Naive thymus-derived CD4-positive, alpha-beta T cell (primary cell): ENCODE measurements at regions of chr1 and their contacts with region 1.

Region 1: DNA sequence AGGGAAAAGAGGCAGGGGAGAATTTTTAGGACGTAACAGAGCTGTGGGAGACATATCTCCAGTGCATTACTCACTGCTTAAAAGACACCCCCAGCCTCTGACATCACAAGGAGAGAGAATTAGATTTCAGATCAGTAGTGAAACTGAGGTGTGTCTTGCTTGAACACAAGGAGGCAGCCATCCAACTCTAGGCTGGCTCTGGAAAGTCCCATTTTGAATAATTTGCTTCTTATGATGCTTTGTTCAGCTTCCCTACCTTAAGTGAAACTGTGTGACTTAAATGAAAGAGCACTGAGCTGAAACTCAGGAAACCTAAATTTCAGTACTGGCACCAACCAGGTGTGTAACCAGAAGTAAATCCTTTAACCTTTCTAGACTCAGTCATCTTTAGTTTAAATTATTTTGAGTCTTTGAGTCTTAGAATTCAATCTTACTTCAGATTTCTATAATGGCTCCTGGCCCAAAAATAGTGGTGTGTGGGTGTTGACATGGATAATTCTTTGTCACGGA is 251.6 kb upstream of the SGIP1 start:
- DNase-seq: peak in 8 of 9 donors; percentile 49 to 88 (median 68)
- ATAC-seq: peak; percentile 95
- H3K4me3 ChIP-seq: no peak overlapping the region
- H3K4me3 Mint-ChIP-seq: peak overlapping the region in 4 of 10 donors; percentile 12 to 57 (median 25)
- H3K27ac ChIP-seq: peak overlapping the region; percentile 64
- H3K27ac Mint-ChIP-seq: peak overlapping the region; percentile 70 to 93 (median 85)
- H3K4me1 ChIP-seq: peaks cover 49 to 59% of the 10 kb centered on the region in 2 donors
- H3K4me1 Mint-ChIP-seq: peaks cover 57 to 98% (median 89%) of the 10 kb centered on the region in 7 donors
- H3K27me3 ChIP-seq: no peaks in the 10 kb centered on the region
- H3K27me3 Mint-ChIP-seq: no peaks in the 10 kb centered on the region

Region 2: DNA sequence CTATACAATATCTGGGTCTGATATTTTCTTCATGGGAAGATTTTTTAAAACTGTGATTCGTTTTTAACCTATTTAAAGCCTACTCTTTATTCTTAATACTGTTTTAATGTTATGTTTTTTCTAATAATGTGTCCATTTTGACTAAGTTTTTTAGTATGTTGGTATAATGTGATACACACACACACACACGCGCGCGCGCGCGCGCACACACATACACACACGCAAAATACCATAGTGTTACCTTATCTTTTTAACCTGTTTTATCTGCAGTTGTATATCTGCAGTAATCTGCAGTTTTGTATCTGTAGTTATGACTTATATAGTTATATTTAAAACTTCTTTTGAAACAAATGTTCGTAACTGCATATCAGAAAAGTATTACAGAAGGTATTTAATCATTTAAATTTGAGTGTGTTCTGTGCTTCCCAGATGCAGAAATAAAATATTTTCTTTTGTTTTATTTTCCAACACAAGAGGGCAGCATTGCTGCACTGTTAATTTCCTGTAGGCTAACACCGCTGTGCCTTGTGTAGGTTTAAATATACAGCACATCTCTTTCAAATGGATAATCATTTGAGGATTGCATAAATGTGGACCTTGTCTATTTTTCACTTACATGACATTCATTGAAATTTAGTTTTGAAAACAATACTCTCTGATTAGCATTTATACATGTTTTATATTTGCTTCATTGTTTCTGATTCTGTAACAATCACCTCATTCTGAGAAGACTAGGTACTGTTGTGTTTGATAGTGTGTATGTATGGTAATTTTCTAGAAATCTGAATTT is 323.6 kb before region 1 on chr1:
- CTCF ChIA-PET with region 1: interaction called, 5 read pairs
- POLR2A ChIA-PET with region 1: no interaction called
- intact Hi-C with region 1: loop called in 1 of 2 experiments (anchors 1 kb)
- DNase-seq: peak in 7 of 9 donors; percentile 23 to 75 (median 64)
- ATAC-seq: peak; percentile 80
- H3K4me3 ChIP-seq: no peak overlapping the region
- H3K4me3 Mint-ChIP-seq: no peak overlapping the region
- H3K27ac ChIP-seq: no peak overlapping the region
- H3K27ac Mint-ChIP-seq: no peak overlapping the region
- H3K4me1 ChIP-seq: no peaks in the 10 kb centered on the region
- H3K4me1 Mint-ChIP-seq: peaks cover 0 to 12% (median 0%) of the 10 kb centered on the region in 7 donors
- H3K27me3 ChIP-seq: no peaks in the 10 kb centered on the region
- H3K27me3 Mint-ChIP-seq: peaks cover 0 to 7% (median 3%) of the 10 kb centered on the region in 5 donors

Region 3: DNA sequence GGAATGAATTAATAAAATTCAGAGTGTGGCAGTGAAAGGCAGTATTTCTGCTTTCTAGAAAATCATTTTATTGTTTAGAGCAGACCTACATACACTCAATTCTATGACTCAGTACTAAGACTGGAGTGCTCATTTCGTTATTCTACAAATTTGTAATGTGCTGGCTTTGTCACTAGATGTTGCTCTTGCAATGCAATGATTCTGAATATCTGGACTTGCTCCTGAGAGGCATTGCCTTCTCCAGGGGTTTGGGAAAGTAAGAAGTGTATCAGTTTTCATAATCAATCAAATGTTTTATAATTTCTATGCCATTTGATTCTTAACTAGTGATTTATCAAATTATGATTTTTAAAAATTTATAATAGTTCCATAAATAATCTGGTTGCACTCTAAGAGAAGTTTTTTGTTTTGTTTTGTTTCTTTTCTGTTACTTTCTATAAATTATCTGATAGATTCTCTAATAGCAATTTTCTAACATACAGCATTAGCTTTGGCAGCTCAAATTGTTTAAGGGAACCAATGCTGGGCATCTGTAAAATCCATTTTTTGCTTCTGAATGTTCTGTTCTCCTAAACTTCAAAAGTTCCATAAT is 29.0 kb before region 1 on chr1:
- CTCF ChIA-PET with region 1: interaction called, 5 read pairs
- POLR2A ChIA-PET with region 1: no interaction called
- intact Hi-C with region 1: loop called in 1 of 2 experiments (anchors 1 kb)
- DNase-seq: peak in 6 of 9 donors; percentile 29 to 58 (median 46)
- ATAC-seq: peak; percentile 83
- H3K4me3 ChIP-seq: no peak overlapping the region
- H3K4me3 Mint-ChIP-seq: no peak overlapping the region
- H3K27ac ChIP-seq: no peak overlapping the region
- H3K27ac Mint-ChIP-seq: peak overlapping the region in 2 of 9 donors; percentile 19 to 64
- H3K4me1 ChIP-seq: peaks cover 10 to 12% of the 10 kb centered on the region in 2 donors
- H3K4me1 Mint-ChIP-seq: peaks cover 6 to 57% (median 19%) of the 10 kb centered on the region in 7 donors
- H3K27me3 ChIP-seq: no peaks in the 10 kb centered on the region
- H3K27me3 Mint-ChIP-seq: no peaks in the 10 kb centered on the region

Region 4: DNA sequence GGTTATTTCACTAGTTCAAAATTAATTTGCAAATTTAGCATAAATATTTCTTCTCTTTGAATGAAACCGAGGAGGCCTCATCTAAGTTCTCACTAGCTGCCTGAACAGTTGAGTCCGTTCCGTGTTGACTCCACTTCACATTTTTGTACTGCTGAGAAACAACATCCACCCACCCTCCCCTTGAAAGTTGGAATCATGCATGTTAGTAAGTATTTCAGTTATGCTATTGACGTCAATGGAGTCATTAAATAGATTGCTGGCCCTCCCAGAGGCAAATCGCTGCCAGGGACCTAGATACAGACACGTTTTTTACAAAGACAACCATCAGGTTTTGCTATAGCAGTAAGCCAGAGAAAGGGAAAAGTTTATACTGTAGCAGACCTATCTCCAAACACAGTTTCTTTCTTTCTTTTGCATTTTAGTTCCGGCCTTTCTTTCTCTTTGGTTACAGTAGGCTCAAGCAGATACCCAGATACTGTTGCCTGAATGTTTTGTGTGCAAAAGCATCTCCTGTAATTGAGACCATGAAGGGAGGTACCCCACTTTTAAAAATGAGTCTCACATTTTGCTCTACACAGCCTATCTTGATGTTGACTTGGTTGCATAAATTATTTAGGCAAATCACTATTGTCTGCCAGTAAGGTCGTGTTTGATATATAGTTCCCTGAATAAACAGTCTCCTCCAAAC is 11.0 kb before region 1 on chr1:
- CTCF ChIA-PET with region 1: no interaction called
- POLR2A ChIA-PET with region 1: interaction called, 6 read pairs
- intact Hi-C with region 1: loop called (anchors 1 kb)
- DNase-seq: peak in 7 of 9 donors; percentile 43 to 72 (median 64)
- ATAC-seq: peak; percentile 64
- H3K4me3 ChIP-seq: no peak overlapping the region
- H3K4me3 Mint-ChIP-seq: peak overlapping the region in 9 of 10 donors; percentile 22 to 69 (median 33)
- H3K27ac ChIP-seq: peak overlapping the region; percentile 59
- H3K27ac Mint-ChIP-seq: peak overlapping the region; percentile 60 to 92 (median 87)
- H3K4me1 ChIP-seq: peaks cover 30 to 43% of the 10 kb centered on the region in 2 donors
- H3K4me1 Mint-ChIP-seq: peaks cover 36 to 69% (median 54%) of the 10 kb centered on the region in 7 donors
- H3K27me3 ChIP-seq: no peaks in the 10 kb centered on the region
- H3K27me3 Mint-ChIP-seq: no peaks in the 10 kb centered on the region

Region 5: DNA sequence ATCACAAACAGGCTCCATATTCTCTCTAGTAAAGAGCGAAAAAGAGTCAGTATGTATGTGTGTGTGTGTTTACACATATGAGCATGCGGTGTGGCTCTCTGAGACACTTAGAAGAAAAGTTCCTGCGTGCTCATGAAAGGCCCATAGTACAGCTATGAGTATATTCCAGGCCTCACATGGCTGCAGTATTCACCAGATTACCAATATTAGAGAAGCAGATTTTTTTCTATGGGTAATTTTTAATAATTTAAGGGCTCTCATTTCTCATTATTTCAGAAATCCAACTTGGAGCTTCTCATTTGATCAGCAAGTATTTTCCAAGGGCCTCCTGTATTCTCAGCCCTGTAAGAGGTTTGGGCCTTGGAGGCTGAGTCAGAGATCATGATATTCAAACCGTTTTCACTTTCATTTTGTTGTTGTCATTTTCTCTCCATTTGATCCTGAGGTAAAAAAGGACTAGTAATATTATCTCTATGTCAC is 18.6 kb after region 1 on chr1:
- CTCF ChIA-PET with region 1: interaction called, 6 read pairs
- POLR2A ChIA-PET with region 1: interaction called, 7 read pairs
- intact Hi-C with region 1: loop called (anchors 1 kb)
- DNase-seq: peak in 7 of 9 donors; percentile 32 to 62 (median 45)
- ATAC-seq: peak; percentile 80
- H3K4me3 ChIP-seq: peak overlapping the region; percentile 12
- H3K4me3 Mint-ChIP-seq: peak overlapping the region; percentile 68 to 92 (median 85)
- H3K27ac ChIP-seq: peak overlapping the region; percentile 5
- H3K27ac Mint-ChIP-seq: peak overlapping the region; percentile 82 to 98 (median 91)
- H3K4me1 ChIP-seq: peaks cover 24 to 29% of the 10 kb centered on the region in 2 donors
- H3K4me1 Mint-ChIP-seq: peaks cover 12 to 46% (median 30%) of the 10 kb centered on the region in 7 donors
- H3K27me3 ChIP-seq: no peaks in the 10 kb centered on the region
- H3K27me3 Mint-ChIP-seq: peaks cover 0 to 3% (median 0%) of the 10 kb centered on the region in 5 donors

Region 6: DNA sequence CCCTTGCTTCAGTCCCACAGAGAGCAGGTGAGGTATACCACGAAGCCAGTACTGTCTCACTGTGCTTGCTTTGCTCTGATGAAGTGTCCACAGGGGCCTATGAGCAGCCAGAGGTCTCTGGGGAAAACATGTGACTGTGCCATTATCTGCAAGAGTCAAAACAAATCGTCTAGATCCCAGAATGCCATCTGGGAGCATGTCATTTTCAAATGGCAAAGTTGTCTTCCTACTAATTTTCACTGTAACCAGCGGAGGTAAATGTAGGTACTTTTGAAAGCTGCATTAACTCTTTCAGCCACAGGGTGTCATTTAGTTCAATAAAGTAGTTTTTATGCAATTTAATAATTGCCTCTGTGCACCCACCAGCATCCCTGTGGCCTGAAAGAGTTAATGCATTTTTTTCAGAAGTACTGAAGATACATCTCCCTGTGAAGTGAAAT is 77.9 kb after region 1 on chr1:
- CTCF ChIA-PET with region 1: no interaction called
- POLR2A ChIA-PET with region 1: interaction called, 3 read pairs
- intact Hi-C with region 1: loop called in 1 of 2 experiments (anchors 1 kb)
- DNase-seq: no peak
- ATAC-seq: no peak
- H3K4me3 ChIP-seq: no peak overlapping the region
- H3K4me3 Mint-ChIP-seq: no peak overlapping the region
- H3K27ac ChIP-seq: no peak overlapping the region
- H3K27ac Mint-ChIP-seq: peak overlapping the region in 3 of 9 donors; percentile 45 to 72 (median 58)
- H3K4me1 ChIP-seq: peaks cover 40 to 51% of the 10 kb centered on the region in 2 donors
- H3K4me1 Mint-ChIP-seq: peaks cover 40 to 80% (median 65%) of the 10 kb centered on the region in 7 donors
- H3K27me3 ChIP-seq: no peaks in the 10 kb centered on the region
- H3K27me3 Mint-ChIP-seq: no peaks in the 10 kb centered on the region

Region 7: DNA sequence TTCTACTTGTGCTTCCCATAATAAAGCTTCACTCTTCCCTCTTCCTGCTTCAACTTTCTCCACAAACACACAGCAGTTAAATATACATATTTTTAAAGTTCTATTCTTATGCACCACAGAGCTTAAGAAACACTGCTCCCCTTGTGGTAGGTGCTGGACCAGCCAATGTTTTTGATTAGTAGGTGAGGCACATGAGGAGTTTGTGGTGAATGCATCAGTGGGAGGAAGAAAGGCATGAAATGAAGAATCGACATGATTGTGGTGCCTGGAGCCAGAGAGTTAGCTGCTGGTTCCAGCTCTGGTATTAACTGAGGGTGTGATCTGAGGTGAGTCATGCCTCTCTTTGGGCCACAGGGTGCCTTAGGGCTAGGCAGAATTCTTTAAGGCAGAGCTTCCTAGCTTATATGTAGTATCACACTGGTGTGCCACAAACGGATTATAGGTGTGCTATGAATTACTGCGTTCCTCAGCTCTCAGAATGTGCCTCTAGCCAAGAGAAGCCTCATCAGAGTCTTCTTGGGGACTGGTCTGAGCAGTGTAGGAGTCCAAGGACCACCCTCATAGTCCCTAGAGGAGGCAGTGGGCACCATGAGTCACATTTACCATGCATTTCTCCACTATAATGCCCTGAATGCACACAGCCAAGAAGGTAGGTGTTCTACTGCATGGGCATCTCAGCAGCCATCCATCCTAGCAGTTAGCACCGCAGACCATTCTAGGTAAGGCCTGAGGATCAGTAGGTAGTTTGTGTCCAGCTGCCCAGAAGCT is 154.2 kb after region 1 on chr1:
- CTCF ChIA-PET with region 1: interaction called, 15 read pairs
- POLR2A ChIA-PET with region 1: no interaction called
- intact Hi-C with region 1: loop called in 1 of 2 experiments (anchors 1 kb)
- DNase-seq: peak in 7 of 9 donors; percentile 12 to 52 (median 32)
- ATAC-seq: peak; percentile 79
- H3K4me3 ChIP-seq: no peak overlapping the region
- H3K4me3 Mint-ChIP-seq: no peak overlapping the region
- H3K27ac ChIP-seq: no peak overlapping the region
- H3K27ac Mint-ChIP-seq: peak overlapping the region in 4 of 9 donors; percentile 3 to 30 (median 8)
- H3K4me1 ChIP-seq: peaks cover 3 to 4% of the 10 kb centered on the region in 2 donors
- H3K4me1 Mint-ChIP-seq: peaks cover 6 to 36% (median 14%) of the 10 kb centered on the region in 7 donors
- H3K27me3 ChIP-seq: no peaks in the 10 kb centered on the region
- H3K27me3 Mint-ChIP-seq: no peaks in the 10 kb centered on the region